ENCODE measurements at regions of chr9 and their contacts with region 1.

Region 1: GRCh38 chr9:17986595-17986994 is 407.7 kb downstream of the SH3GL2 start:
- DNase-seq: no peak
- H3K4me3 ChIP-seq: no peak overlapping the region
- H3K27ac ChIP-seq: no peak overlapping the region
- H3K4me1 ChIP-seq: no peaks in the 10 kb centered on the region
- H3K27me3 ChIP-seq: no peaks in the 10 kb centered on the region
- CTCF ChIP-seq: no peak

Region 2: DNA sequence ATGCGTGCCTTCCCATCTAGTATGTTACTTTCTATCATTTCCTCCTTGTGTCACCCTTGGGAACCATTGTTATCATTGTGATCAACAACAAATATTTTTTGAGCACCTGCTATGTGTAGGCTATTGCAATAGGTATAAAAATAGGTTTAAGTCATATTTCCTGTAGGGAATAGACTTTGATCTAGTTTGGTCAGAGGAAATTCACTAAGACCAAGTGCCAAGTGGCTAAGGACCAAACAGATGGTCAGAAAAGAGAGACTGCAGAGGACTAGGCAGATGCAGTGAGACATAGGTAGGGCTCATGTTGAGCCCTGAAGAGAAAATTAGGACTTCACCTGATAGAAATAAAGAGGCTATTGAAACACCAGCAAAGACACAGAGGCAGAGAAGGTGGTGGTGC is 57.4 kb after region 1 on chr9:
- CTCF ChIA-PET with region 1: no interaction called
- dilution Hi-C with region 1: no loop called
- in situ Hi-C with region 1: no loop called
- intact Hi-C with region 1: loop called (anchors 10 kb)
- DNase-seq: no peak
- H3K4me3 ChIP-seq: no peak overlapping the region
- H3K27ac ChIP-seq: no peak overlapping the region
- H3K4me1 ChIP-seq: no peaks in the 10 kb centered on the region
- H3K27me3 ChIP-seq: no peaks in the 10 kb centered on the region
- CTCF ChIP-seq: no peak

Measured in mammary epithelial cell (primary cell).